ENCODE measurements at regions of chr6 and their contacts with region 1.

Region 1: DNA sequence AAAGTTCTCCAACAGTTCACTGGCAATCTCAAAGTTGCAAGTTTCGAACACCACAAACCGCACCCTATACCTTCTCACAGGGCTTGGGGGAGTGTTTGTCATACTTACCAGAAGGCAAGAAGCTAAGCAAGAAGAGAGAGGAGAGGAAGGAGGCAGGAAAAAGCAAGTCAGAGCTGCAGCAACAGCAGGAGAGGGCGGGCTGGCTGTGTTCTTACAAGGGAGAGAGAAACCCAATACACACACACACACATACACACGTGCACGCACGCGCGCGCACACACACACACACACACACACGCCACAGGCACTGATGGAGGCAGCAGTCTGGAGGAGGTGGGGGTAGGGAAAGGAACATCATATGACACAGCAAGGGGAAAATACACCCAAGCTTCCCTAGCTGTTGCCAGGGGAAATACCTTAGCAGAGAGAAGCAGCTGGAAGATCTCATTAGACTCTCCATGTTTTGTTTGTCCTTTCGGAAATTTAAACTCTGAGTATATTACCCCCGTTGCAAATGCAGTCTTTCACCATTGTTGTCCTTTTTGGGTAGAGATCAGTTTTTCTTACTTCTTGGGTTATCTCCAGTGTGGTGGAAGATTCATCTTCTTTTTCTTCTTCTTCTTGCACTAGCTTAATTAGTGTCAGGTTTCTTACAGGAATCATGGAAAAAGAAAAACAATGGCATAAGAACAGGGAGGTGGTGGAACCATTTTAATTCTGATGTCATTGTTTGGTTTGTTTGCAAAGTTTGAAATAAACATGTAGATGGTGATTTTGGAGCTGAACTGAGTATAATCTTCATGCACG is at the start of gene TXLNB:
- DNase-seq: no peak
- ATAC-seq: peak; percentile 59
- H3K4me3 Mint-ChIP-seq: peak within 1 kb of the TSS; percentile 76
- H3K27ac Mint-ChIP-seq: peak within 1 kb of the TSS; percentile 96
- H3K4me1 Mint-ChIP-seq: peaks cover 76% of the 10 kb centered on the region
- H3K27me3 Mint-ChIP-seq: no peaks in the 10 kb centered on the region
- CTCF ChIP-seq: no peak
- total RNA-seq, gene TXLNB: 1.9 and 2.4 TPM in 2 replicates

Region 2: DNA sequence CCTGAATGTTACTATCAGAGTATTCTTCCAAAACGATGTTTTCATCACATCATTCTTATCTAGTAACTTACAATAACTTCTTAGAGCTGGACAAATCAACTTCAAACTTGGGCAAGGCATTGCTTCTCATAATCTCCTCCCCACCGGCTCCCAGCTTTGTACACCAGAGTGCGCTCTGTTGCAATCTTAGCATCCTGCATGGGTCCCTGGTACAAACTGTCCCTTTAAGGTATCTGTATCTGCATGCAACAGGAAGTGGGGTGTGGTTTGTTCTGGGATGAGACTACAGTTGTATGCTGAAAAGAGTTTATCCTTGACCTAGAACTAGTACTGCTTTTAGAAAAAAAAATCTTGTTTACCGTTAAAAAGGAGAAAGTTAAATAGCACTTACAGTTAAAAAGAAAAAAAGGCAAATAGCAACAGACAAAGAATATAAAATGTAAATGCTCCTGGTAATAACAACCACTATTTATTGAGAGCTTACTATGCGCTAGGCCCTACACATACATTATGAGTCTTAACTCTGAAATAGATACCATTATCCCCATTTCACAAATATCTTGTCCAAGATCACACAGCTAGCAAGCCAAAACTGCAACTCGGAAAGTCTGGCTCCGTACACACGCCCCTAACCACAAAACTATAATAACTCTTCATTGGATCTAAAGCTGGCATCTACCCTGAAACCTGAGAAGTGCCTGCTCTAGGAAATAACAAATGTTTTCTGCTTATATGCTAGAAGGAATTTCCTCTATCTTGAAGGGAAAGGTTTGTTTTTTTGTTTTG is 166.9 kb before region 1 on chr6:
- CTCF ChIA-PET with region 1: no interaction called
- POLR2A ChIA-PET with region 1: no interaction called
- intact Hi-C with region 1: no loop called
- DNase-seq: peak; percentile 42
- ATAC-seq: peak; percentile 100
- H3K4me3 Mint-ChIP-seq: peak overlapping the region; percentile 62
- H3K27ac Mint-ChIP-seq: peak overlapping the region; percentile 88
- H3K4me1 Mint-ChIP-seq: peaks cover 38% of the 10 kb centered on the region
- H3K27me3 Mint-ChIP-seq: no peaks in the 10 kb centered on the region
- CTCF ChIP-seq: no peak

Region 3: GRCh38 chr6:139250296-139251044 is 41.5 kb before region 1 on chr6:
- CTCF ChIA-PET with region 1: interaction called, 5 read pairs
- POLR2A ChIA-PET with region 1: no interaction called
- intact Hi-C with region 1: loop called (anchors 2 kb)
- DNase-seq: peak; percentile 32
- ATAC-seq: peak; percentile 100
- H3K4me3 Mint-ChIP-seq: no peak overlapping the region
- H3K27ac Mint-ChIP-seq: no peak overlapping the region
- H3K4me1 Mint-ChIP-seq: peaks cover 12% of the 10 kb centered on the region
- H3K27me3 Mint-ChIP-seq: no peaks in the 10 kb centered on the region
- CTCF ChIP-seq: no peak

Region 4: GRCh38 chr6:139271056-139271455 is 21.0 kb before region 1 on chr6:
- CTCF ChIA-PET with region 1: interaction called, 5 read pairs
- POLR2A ChIA-PET with region 1: interaction called, 56 read pairs
- intact Hi-C with region 1: loop called (anchors 1 kb)
- DNase-seq: no peak
- ATAC-seq: peak; percentile 94
- H3K4me3 Mint-ChIP-seq: peak overlapping the region; percentile 75
- H3K27ac Mint-ChIP-seq: peak overlapping the region; percentile 96
- H3K4me1 Mint-ChIP-seq: peaks cover 80% of the 10 kb centered on the region
- H3K27me3 Mint-ChIP-seq: no peaks in the 10 kb centered on the region
- CTCF ChIP-seq: no peak

Region 5: DNA sequence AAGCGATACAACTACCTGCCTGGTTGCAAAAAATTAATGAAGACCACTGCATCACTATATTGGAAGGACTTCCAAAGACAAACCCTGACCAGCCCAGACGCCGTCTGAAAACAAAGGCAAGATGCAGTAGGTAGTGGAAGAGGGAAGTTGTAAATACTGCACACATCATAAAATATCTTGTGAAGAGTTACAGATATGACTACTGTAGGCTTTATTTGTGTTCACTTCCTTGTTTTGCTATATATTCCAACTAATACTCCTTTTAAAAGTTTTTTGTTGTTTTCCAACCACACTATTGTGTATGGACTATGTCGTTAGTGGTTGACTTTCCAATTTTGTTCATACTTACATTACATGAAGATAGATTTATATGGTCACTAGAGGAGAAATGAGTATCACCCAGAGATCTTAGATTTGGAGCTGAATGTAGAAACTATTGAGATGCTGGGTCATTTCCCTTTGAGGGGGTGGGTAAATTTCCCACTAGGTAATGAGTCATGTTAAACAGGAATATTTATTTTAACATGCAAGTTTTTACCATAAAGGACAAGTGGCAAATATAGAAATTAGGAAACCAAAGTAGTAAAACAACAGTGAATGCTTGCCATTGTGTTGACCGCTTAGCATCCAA is 16.4 kb after region 1 on chr6:
- CTCF ChIA-PET with region 1: no interaction called
- POLR2A ChIA-PET with region 1: no interaction called
- intact Hi-C with region 1: loop called (anchors 2 kb)
- DNase-seq: no peak
- ATAC-seq: no peak
- H3K4me3 Mint-ChIP-seq: no peak overlapping the region
- H3K27ac Mint-ChIP-seq: peak overlapping the region; percentile 52
- H3K4me1 Mint-ChIP-seq: peaks cover 13% of the 10 kb centered on the region
- H3K27me3 Mint-ChIP-seq: no peaks in the 10 kb centered on the region
- CTCF ChIP-seq: no peak

Region 6: GRCh38 chr6:139550361-139550760 is 258.3 kb after region 1 on chr6:
- CTCF ChIA-PET with region 1: no interaction called
- POLR2A ChIA-PET with region 1: no interaction called
- intact Hi-C with region 1: no loop called
- DNase-seq: no peak
- ATAC-seq: no peak
- H3K4me3 Mint-ChIP-seq: no peak overlapping the region
- H3K27ac Mint-ChIP-seq: no peak overlapping the region
- H3K4me1 Mint-ChIP-seq: no peaks in the 10 kb centered on the region
- H3K27me3 Mint-ChIP-seq: no peaks in the 10 kb centered on the region
- CTCF ChIP-seq: no peak